ENCODE measurements at regions of chr21 and their contacts with region 1.

Region 1: GRCh38 chr21:44338971-44339910 is at the start of gene CFAP410:
- DNase-seq: peak; percentile 94 to 97 (median 96)
- H3K4me3 ChIP-seq: peak within 1 kb of the TSS; percentile 87 to 91
- H3K4me3 Mint-ChIP-seq: peak within 1 kb of the TSS; percentile 84 to 98 (median 92)
- H3K27ac ChIP-seq: peak within 1 kb of the TSS; percentile 86
- H3K27ac Mint-ChIP-seq: peak within 1 kb of the TSS; percentile 89 to 99 (median 98)
- H3K4me1 ChIP-seq: peaks cover 15% of the 10 kb centered on the region
- H3K4me1 Mint-ChIP-seq: peaks cover 12 to 37% (median 18%) of the 10 kb centered on the region in 4 donors
- H3K27me3 ChIP-seq: no peaks in the 10 kb centered on the region
- H3K27me3 Mint-ChIP-seq: peaks cover 0 to 1% of the 10 kb centered on the region in 2 donors
- total RNA-seq, gene CFAP410: 51.7 to 55.2 TPM

Region 2: GRCh38 chr21:42973991-42974831 is 1365.0 kb before region 1 on chr21 and contains the start of gene PKNOX1:
- CTCF ChIA-PET with region 1: no interaction called
- POLR2A ChIA-PET with region 1: interaction called, 3 read pairs
- intact Hi-C with region 1: loop called (anchors 5 kb)
- DNase-seq: peak; percentile 99 to 100 (median 99)
- H3K4me3 ChIP-seq: peak within 1 kb of the TSS; percentile 70 to 94
- H3K4me3 Mint-ChIP-seq: peak within 1 kb of the TSS; percentile 84 to 95 (median 90)
- H3K27ac ChIP-seq: peak within 1 kb of the TSS; percentile 91
- H3K27ac Mint-ChIP-seq: peak within 1 kb of the TSS; percentile 91 to 98 (median 93)
- H3K4me1 ChIP-seq: peaks cover 25% of the 10 kb centered on the region
- H3K4me1 Mint-ChIP-seq: peaks cover 16 to 42% (median 30%) of the 10 kb centered on the region in 4 donors
- H3K27me3 ChIP-seq: no peaks in the 10 kb centered on the region
- H3K27me3 Mint-ChIP-seq: no peaks in the 10 kb centered on the region
- total RNA-seq, gene PKNOX1: 21.5 to 24.8 TPM

Region 3: DNA sequence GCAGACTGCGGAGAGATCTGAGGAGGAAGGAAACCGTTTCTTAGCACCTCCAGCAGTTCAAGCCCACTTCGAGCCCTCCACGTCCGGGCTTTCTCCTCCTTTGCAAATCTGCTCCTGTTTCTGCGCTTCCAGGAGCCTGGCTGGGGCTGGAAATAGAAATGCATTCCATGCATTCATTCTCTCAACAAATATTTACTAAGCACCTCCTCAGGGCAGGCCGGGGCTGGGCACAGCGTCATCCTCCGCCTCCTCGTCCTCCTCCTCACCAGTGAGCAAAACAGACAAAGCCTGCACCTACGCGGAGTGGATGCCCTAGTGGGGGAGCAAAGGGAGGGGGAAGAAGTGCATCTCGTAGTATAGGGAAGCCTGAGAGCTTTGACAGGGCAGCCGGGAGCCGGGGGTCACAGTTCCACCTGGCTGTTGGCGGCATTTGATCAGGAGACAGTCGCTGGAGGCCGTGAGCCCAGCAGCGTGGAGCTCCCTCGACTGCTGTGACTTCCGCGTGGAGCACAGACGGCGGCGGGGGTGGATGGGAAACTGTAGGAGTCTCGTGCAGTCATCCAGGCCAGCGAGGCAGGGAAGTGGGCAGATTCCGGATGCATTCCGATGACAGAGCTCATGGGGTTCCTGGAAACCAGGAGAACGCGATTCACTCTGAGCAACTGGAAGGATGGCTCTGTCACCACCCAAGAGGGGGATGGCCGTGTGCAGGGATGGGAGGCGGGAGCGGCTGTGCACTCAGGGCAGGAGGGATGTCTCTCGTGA is 1005.8 kb before region 1 on chr21:
- CTCF ChIA-PET with region 1: no interaction called
- POLR2A ChIA-PET with region 1: no interaction called
- intact Hi-C with region 1: no loop called
- DNase-seq: no peak
- H3K4me3 ChIP-seq: no peak overlapping the region
- H3K4me3 Mint-ChIP-seq: peak overlapping the region in 1 of 8 donors; percentile 32
- H3K27ac ChIP-seq: no peak overlapping the region
- H3K27ac Mint-ChIP-seq: peak overlapping the region in 1 of 7 donors; percentile 57
- H3K4me1 ChIP-seq: no peaks in the 10 kb centered on the region
- H3K4me1 Mint-ChIP-seq: peaks cover 0 to 8% (median 4%) of the 10 kb centered on the region in 4 donors
- H3K27me3 ChIP-seq: no peaks in the 10 kb centered on the region
- H3K27me3 Mint-ChIP-seq: peaks cover 2 to 4% of the 10 kb centered on the region in 2 donors

Region 4: DNA sequence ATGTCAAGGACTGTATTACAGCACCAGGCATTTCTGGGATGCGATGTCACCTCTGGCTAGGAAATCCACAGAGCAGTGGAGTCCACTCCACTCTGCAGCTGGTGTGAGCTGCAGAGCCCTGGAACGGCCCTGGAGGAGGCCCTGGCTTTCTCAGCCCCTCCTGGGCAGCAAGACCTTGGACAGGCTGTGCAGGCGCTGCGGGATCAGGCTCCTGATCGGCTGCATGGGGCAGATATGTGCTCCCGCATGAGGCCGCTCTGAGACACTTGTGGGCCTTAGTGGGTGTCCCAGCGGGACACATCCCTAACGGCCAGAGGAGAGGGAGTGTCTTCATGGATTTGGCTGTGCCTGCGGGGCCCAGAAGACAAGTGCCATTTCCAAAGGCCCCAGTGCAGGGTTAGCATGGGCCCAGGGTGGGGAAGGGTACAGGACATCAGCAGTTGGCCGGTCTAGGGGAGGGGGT is 83.7 kb before region 1 on chr21:
- CTCF ChIA-PET with region 1: no interaction called
- POLR2A ChIA-PET with region 1: no interaction called
- intact Hi-C with region 1: no loop called
- DNase-seq: no peak
- H3K4me3 ChIP-seq: no peak overlapping the region
- H3K4me3 Mint-ChIP-seq: no peak overlapping the region
- H3K27ac ChIP-seq: no peak overlapping the region
- H3K27ac Mint-ChIP-seq: no peak overlapping the region
- H3K4me1 ChIP-seq: no peaks in the 10 kb centered on the region
- H3K4me1 Mint-ChIP-seq: no peaks in the 10 kb centered on the region
- H3K27me3 ChIP-seq: no peaks in the 10 kb centered on the region
- H3K27me3 Mint-ChIP-seq: no peaks in the 10 kb centered on the region

Region 5: DNA sequence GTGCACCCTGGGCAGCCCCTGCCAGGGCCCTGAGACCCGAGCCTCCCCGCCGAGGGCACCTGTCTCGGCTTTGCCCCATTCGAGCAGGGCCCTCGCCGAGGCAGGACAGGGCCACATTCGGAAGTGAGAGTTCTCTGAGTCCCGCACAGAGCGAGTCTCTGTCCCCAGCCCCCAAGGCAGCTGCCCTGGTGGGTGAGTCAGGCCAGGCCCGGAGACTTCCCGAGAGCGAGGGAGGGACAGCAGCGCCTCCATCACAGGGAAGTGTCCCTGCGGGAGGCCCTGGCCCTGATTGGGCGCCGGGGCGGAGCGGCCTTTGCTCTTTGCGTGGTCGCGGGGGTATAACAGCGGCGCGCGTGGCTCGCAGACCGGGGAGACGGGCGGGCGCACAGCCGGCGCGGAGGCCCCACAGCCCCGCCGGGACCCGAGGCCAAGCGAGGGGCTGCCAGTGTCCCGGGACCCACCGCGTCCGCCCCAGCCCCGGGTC is 53.7 kb before region 1 on chr21 and contains the start of gene AIRE:
- CTCF ChIA-PET with region 1: no interaction called
- POLR2A ChIA-PET with region 1: no interaction called
- intact Hi-C with region 1: no loop called
- DNase-seq: no peak
- H3K4me3 ChIP-seq: no peak within 1 kb of the TSS
- H3K4me3 Mint-ChIP-seq: no peak within 1 kb of the TSS
- H3K27ac ChIP-seq: no peak within 1 kb of the TSS
- H3K27ac Mint-ChIP-seq: no peak within 1 kb of the TSS
- H3K4me1 ChIP-seq: no peaks in the 10 kb centered on the region
- H3K4me1 Mint-ChIP-seq: peaks cover 0 to 15% (median 4%) of the 10 kb centered on the region in 4 donors
- H3K27me3 ChIP-seq: no peaks in the 10 kb centered on the region
- H3K27me3 Mint-ChIP-seq: no peaks in the 10 kb centered on the region
- total RNA-seq, gene AIRE: not detected

Region 6: GRCh38 chr21:44297525-44298290 is 41.5 kb before region 1 on chr21:
- CTCF ChIA-PET with region 1: interaction called, 4 read pairs
- POLR2A ChIA-PET with region 1: interaction called, 10 read pairs
- intact Hi-C with region 1: no loop called
- DNase-seq: peak; percentile 72 to 84 (median 74)
- H3K4me3 ChIP-seq: no peak overlapping the region
- H3K4me3 Mint-ChIP-seq: peak overlapping the region; percentile 36 to 94 (median 68)
- H3K27ac ChIP-seq: peak overlapping the region; percentile 36
- H3K27ac Mint-ChIP-seq: peak overlapping the region; percentile 83 to 94 (median 89)
- H3K4me1 ChIP-seq: peaks cover 71% of the 10 kb centered on the region
- H3K4me1 Mint-ChIP-seq: peaks cover 21 to 52% (median 42%) of the 10 kb centered on the region in 4 donors
- H3K27me3 ChIP-seq: no peaks in the 10 kb centered on the region
- H3K27me3 Mint-ChIP-seq: no peaks in the 10 kb centered on the region

Region 7: DNA sequence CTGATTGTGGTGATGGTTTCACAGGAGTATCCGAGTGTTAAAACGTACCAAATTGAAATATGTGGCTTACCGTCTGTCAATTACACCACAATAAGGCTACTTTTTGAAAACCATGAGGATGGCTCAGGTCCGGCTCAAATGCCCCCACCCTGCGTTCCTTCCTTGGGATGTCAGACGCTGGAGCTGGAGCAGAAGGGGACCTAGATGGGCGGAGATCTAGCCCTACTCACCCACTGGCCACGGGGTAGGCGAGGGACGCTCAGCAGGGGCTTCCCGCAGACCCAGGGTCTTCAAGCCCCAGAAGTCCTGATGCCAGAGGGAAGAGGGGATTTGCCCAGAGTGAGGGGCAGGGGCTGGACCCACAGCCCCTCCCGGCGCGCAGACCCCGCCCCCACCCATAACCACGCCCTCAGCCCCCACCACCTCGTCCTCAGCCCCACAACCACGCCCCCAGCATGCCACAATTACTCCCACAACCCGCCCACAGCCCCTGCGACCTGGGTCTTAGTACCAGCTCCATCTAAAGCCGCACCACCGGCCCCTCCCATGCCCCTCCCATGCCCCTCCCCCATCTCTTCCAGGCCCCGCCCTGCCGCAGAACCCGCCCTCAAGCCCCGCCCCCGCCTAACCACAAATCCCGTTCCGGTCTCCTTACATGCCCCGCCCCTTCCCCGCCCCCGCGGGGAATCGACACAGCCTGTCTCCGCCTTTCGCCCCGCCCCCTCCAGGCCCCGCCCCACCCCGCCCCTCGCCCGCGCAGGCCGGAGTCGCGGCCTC is 115.7 kb after region 1 on chr21 and contains the start of gene LRRC3:
- CTCF ChIA-PET with region 1: no interaction called
- POLR2A ChIA-PET with region 1: interaction called, 4 read pairs
- intact Hi-C with region 1: loop called (anchors 1 kb)
- DNase-seq: peak; percentile 71 to 85 (median 80)
- H3K4me3 ChIP-seq: peak within 1 kb of the TSS; percentile 11 to 55
- H3K4me3 Mint-ChIP-seq: peak within 1 kb of the TSS; percentile 73 to 86 (median 78)
- H3K27ac ChIP-seq: no peak within 1 kb of the TSS
- H3K27ac Mint-ChIP-seq: peak within 1 kb of the TSS; percentile 4 to 88 (median 53)
- H3K4me1 ChIP-seq: peaks cover 13% of the 10 kb centered on the region
- H3K4me1 Mint-ChIP-seq: peaks cover 0 to 18% (median 7%) of the 10 kb centered on the region in 4 donors
- H3K27me3 ChIP-seq: no peaks in the 10 kb centered on the region
- H3K27me3 Mint-ChIP-seq: peaks cover 2% of the 10 kb centered on the region in 2 donors
- total RNA-seq, gene LRRC3: 1.4 to 1.5 TPM

Region 8: GRCh38 chr21:44817506-44817880 is 478.3 kb after region 1 on chr21:
- CTCF ChIA-PET with region 1: no interaction called
- POLR2A ChIA-PET with region 1: interaction called, 5 read pairs
- intact Hi-C with region 1: loop called (anchors 10 kb)
- DNase-seq: peak; percentile 89 to 91 (median 91)
- H3K4me3 ChIP-seq: peak overlapping the region in 1 of 2 donors; percentile 57
- H3K4me3 Mint-ChIP-seq: peak overlapping the region; percentile 23 to 80 (median 58)
- H3K27ac ChIP-seq: no peak overlapping the region
- H3K27ac Mint-ChIP-seq: peak overlapping the region in 3 of 7 donors; percentile 17 to 48 (median 31)
- H3K4me1 ChIP-seq: peaks cover 16% of the 10 kb centered on the region
- H3K4me1 Mint-ChIP-seq: peaks cover 1 to 34% (median 16%) of the 10 kb centered on the region in 4 donors
- H3K27me3 ChIP-seq: no peaks in the 10 kb centered on the region
- H3K27me3 Mint-ChIP-seq: no peaks in the 10 kb centered on the region

Measured in CD4-positive, alpha-beta memory T cell (primary cell).